Endothelial cell of umbilical vein (primary cell): ENCODE measurements at regions of chr1 and their contacts with region 1.

Region 1: GRCh38 chr1:168603501-168604110 is 27.2 kb downstream of the XCL1 start:
- DNase-seq: peak; percentile 54
- H3K4me3 ChIP-seq: no peak overlapping the region
- H3K27ac ChIP-seq: no peak overlapping the region
- H3K4me1 ChIP-seq: no peaks in the 10 kb centered on the region
- H3K27me3 ChIP-seq: no peaks in the 10 kb centered on the region
- CTCF ChIP-seq: peak; percentile 70 to 77
- POLR2A ChIP-seq: no peak

Region 2: DNA sequence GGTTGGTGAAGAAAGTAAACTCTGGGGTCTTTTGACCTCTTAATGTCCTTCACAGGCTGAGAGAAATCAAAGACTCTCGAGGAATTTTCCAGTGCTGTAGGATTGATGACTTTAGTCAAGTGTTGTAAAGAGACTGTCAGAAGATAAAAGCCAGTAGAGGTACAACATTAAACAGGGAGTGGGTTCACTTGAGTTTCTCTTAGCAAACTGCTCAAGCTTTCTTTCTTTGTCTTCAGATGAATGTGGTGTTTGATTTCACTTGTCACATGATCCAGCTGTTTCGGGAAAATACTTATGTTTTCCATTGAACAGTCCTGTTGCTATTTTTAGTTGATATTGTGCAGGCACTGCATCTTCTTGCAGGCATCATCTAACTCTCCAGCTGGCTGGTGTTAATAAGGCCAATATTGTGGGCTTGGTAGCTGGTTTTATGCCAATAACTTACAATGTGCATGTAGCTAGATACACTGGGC is 105.4 kb before region 1 on chr1:
- CTCF ChIA-PET with region 1: no interaction called
- POLR2A ChIA-PET with region 1: no interaction called
- dilution Hi-C with region 1: no loop called
- intact Hi-C with region 1: no loop called
- DNase-seq: no peak
- H3K4me3 ChIP-seq: no peak overlapping the region
- H3K27ac ChIP-seq: no peak overlapping the region
- H3K4me1 ChIP-seq: no peaks in the 10 kb centered on the region
- H3K27me3 ChIP-seq: no peaks in the 10 kb centered on the region
- CTCF ChIP-seq: no peak
- POLR2A ChIP-seq: no peak

Region 3: GRCh38 chr1:169106095-169106920 is 502.7 kb after region 1 on chr1 and contains the start of gene ATP1B1:
- CTCF ChIA-PET with region 1: interaction called, 10 read pairs
- POLR2A ChIA-PET with region 1: no interaction called
- dilution Hi-C with region 1: no loop called
- intact Hi-C with region 1: loop called (anchors 2 kb)
- DNase-seq: peak; percentile 87
- H3K4me3 ChIP-seq: peak within 1 kb of the TSS; percentile 89 to 99 (median 94)
- H3K27ac ChIP-seq: peak within 1 kb of the TSS; percentile 89
- H3K4me1 ChIP-seq: peaks cover 35% of the 10 kb centered on the region
- H3K27me3 ChIP-seq: no peaks in the 10 kb centered on the region
- CTCF ChIP-seq: peak in 1 of 2 donors; percentile 44
- POLR2A ChIP-seq: peak; percentile 90
- total RNA-seq, gene ATP1B1: 56.1 and 60.5 TPM in 2 replicates

Region 4: GRCh38 chr1:169361281-169361680 is 757.7 kb after region 1 on chr1:
- CTCF ChIA-PET with region 1: interaction called, 10 read pairs
- POLR2A ChIA-PET with region 1: no interaction called
- dilution Hi-C with region 1: no loop called
- intact Hi-C with region 1: no loop called
- DNase-seq: no peak
- H3K4me3 ChIP-seq: no peak overlapping the region
- H3K27ac ChIP-seq: no peak overlapping the region
- H3K4me1 ChIP-seq: peaks cover 14% of the 10 kb centered on the region
- H3K27me3 ChIP-seq: no peaks in the 10 kb centered on the region
- CTCF ChIP-seq: no peak
- POLR2A ChIP-seq: no peak

Region 5: DNA sequence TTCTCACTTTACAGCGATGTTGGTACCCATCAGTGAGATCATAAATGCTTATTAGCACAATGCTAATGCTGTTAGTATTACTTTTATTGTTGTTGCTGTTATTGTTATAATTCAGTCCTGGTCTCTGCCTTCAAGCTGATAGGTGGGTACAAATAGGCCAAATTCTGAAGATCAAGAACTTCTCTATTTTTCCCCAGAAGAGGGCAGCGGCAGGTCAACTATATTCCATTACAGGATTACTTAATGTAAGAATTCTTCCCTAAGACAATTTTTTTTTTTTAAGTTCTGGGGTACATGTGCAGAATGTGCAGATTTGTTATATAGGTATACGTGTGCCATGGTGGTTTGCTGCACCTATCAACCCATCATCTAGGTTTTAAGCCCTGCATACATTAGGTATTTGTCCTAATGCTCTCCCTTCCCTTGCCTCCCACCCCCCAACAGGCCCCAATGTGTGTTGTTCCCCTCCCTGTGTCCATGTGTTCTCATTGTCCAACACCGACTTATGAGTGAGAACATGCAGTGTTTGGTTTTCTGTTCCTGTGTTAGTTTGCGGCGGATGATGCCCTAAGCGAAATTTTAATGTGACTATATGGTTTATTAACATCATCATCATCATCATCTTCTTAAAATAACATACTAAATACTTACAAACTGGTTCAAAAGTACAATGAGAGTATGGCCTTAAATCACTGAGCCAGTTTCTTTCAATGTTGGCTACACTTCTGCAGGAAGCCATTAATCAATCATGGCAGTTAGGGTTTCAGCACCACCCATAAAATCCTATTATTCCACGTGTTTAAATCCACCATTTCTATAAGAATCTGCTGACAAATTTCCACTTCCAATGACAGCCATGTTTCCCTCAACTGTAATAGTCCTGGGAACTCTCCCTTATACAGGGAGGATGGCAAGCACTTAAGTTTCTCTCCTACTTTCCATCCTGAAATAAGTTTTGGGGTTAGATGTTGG is 862.9 kb after region 1 on chr1:
- CTCF ChIA-PET with region 1: interaction called, 14 read pairs
- POLR2A ChIA-PET with region 1: no interaction called
- dilution Hi-C with region 1: no loop called
- intact Hi-C with region 1: loop called (anchors 2 kb)
- DNase-seq: peak; percentile 59
- H3K4me3 ChIP-seq: no peak overlapping the region
- H3K27ac ChIP-seq: no peak overlapping the region
- H3K4me1 ChIP-seq: no peaks in the 10 kb centered on the region
- H3K27me3 ChIP-seq: no peaks in the 10 kb centered on the region
- CTCF ChIP-seq: no peak
- POLR2A ChIP-seq: no peak

Region 6: GRCh38 chr1:169546087-169546995 is 942.7 kb after region 1 on chr1:
- CTCF ChIA-PET with region 1: interaction called, 204 read pairs
- POLR2A ChIA-PET with region 1: no interaction called
- dilution Hi-C with region 1: no loop called
- intact Hi-C with region 1: loop called (anchors 1 kb)
- DNase-seq: peak; percentile 66
- H3K4me3 ChIP-seq: no peak overlapping the region
- H3K27ac ChIP-seq: no peak overlapping the region
- H3K4me1 ChIP-seq: no peaks in the 10 kb centered on the region
- H3K27me3 ChIP-seq: peaks cover 0 to 2% of the 10 kb centered on the region in 2 experiments
- CTCF ChIP-seq: peak; percentile 63 to 66
- POLR2A ChIP-seq: no peak